Activated B cell treated with CpG ODN at 0.5 μM for 24 hours (primary cell): ENCODE measurements at regions of chr12 and their contacts with region 1.

Region 1: DNA sequence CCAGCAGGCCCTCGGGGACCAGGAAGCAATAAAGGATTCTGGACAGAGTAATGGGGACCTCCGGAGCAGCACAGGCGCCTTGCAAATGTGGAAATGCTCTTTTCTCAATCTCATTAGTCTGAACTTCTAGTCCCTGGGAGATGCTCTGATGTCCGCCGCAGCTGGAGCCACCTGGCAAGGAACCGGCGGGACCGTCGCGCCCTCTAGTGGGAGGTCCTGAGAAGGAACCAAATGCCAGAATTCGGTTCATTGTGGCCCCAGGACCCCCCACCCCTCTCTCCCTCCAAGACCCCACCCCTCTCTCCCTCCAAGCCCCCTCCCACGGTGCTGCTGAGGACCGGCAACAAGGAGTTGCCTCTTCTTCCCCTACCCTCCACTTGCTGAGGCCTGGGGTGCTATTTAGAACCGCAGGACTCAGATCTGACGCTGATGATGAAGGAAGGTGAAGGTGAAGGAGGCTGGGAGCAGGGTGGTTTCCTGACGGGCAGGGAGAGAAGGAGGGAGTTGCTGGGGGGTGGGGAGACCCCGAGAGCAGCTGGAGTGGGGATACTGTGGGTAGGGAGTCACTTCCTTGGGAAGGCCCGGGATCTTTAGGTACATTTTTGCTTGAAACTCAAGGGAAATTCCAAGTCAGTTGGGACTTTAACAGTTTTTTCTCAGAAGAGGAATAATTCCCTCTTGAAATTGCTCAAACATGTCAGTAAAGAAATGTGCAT is 42.5 kb downstream of the SMIM41 start:
- DNase-seq: peak; percentile 56
- ATAC-seq: no peak
- H3K4me3 Mint-ChIP-seq: no peak overlapping the region
- H3K27ac Mint-ChIP-seq: no peak overlapping the region
- H3K4me1 Mint-ChIP-seq: peaks cover 48% of the 10 kb centered on the region
- H3K27me3 Mint-ChIP-seq: peaks cover 11% of the 10 kb centered on the region
- CTCF ChIP-seq: no peak

Region 2: GRCh38 chr12:51823875-51824565 is 298.0 kb before region 1 on chr12:
- CTCF ChIA-PET with region 1: no interaction called
- POLR2A ChIA-PET with region 1: no interaction called
- intact Hi-C with region 1: loop called (anchors 5 kb)
- DNase-seq: no peak
- ATAC-seq: no peak
- H3K4me3 Mint-ChIP-seq: no peak overlapping the region
- H3K27ac Mint-ChIP-seq: no peak overlapping the region
- H3K4me1 Mint-ChIP-seq: peaks cover 16% of the 10 kb centered on the region
- H3K27me3 Mint-ChIP-seq: peaks cover 21% of the 10 kb centered on the region
- CTCF ChIP-seq: no peak

Region 3: GRCh38 chr12:52004042-52004648 is 117.8 kb before region 1 on chr12:
- CTCF ChIA-PET with region 1: interaction called, 9 read pairs
- POLR2A ChIA-PET with region 1: interaction called, 16 read pairs
- intact Hi-C with region 1: loop called (anchors 1 kb)
- DNase-seq: no peak
- ATAC-seq: no peak
- H3K4me3 Mint-ChIP-seq: no peak overlapping the region
- H3K27ac Mint-ChIP-seq: no peak overlapping the region
- H3K4me1 Mint-ChIP-seq: peaks cover 39% of the 10 kb centered on the region
- H3K27me3 Mint-ChIP-seq: no peaks in the 10 kb centered on the region
- CTCF ChIP-seq: no peak

Region 4: DNA sequence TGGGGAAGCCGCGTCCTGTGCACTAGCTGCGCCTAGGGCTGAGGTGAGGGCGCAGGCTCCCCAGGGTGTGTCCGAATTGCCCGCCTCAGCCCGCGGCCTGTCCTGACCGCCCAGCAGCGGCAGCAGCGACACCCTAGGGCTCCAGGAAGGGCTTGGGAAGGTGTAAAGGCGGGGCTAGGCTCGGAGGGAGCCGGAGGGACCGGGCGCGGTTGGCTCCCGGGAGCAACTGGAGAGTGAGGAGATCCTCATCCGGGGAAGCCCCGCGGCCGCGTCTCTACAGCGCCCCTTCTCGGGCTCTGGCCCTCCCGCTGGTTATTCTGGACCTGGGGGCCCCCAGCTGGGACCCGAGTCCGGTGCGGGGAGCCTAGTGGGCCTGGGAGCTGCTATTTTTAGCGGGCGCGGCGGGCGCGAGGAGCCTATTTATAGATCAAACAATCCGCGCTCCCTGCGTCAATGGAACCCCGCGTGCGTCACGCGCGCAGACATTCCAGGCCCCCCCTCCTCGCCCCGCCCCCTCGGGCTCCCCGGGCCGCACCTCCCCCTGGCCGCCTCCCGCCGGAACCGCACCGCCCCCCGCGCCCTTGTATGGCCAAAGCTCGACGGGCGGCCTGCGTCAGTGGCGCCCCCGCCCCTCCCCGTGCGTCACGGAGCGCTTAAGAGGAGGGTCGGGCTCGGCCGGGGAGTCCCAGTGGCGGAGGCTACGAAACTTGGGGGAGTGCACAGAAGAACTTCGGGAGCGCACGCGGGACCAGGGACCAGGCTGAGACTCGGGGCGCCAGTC is 71.0 kb before region 1 on chr12 and contains the start of gene NR4A1:
- CTCF ChIA-PET with region 1: interaction called, 5 read pairs
- POLR2A ChIA-PET with region 1: interaction called, 14 read pairs
- intact Hi-C with region 1: loop called (anchors 1 kb)
- DNase-seq: peak; percentile 100
- ATAC-seq: peak; percentile 82
- H3K4me3 Mint-ChIP-seq: peak within 1 kb of the TSS; percentile 92
- H3K27ac Mint-ChIP-seq: peak within 1 kb of the TSS; percentile 95
- H3K4me1 Mint-ChIP-seq: peaks cover 49% of the 10 kb centered on the region
- H3K27me3 Mint-ChIP-seq: no peaks in the 10 kb centered on the region
- CTCF ChIP-seq: no peak
- total RNA-seq, gene NR4A1: 18.8 and 24.2 TPM in 2 replicates

Region 5: GRCh38 chr12:52082988-52083637 is 38.9 kb before region 1 on chr12:
- CTCF ChIA-PET with region 1: interaction called, 46 read pairs
- POLR2A ChIA-PET with region 1: interaction called, 5 read pairs
- intact Hi-C with region 1: loop called (anchors 1 kb)
- DNase-seq: peak; percentile 70
- ATAC-seq: peak; percentile 63
- H3K4me3 Mint-ChIP-seq: peak overlapping the region; percentile 42
- H3K27ac Mint-ChIP-seq: peak overlapping the region; percentile 48
- H3K4me1 Mint-ChIP-seq: peaks cover 42% of the 10 kb centered on the region
- H3K27me3 Mint-ChIP-seq: peaks cover 8% of the 10 kb centered on the region
- CTCF ChIP-seq: peak; percentile 98

Region 6: DNA sequence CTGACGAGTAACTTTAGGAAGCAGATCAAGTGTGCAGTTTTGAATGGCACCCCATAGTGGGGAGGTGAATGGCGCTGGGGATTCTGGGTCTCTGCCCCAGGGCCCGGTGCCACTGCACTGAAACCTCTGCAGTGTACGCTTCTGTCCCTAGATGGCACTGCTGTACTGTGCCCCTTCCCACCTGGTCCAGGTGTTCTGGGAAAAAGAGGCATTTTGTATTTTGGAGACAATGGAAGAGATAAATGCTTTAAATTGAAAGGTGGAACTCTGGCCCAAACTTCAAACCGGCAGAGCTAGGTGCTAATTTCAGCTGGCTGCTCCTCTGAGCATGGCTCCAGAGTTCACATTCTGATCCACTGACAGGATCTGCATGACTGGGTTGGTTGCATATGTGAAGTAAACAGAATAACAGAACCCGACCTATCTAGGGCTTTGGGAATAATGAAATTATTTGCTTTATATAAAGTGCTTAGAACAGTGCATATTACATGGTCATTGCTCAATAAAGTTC is 17.6 kb after region 1 on chr12:
- CTCF ChIA-PET with region 1: no interaction called
- POLR2A ChIA-PET with region 1: no interaction called
- intact Hi-C with region 1: no loop called
- DNase-seq: no peak
- ATAC-seq: peak; percentile 73
- H3K4me3 Mint-ChIP-seq: no peak overlapping the region
- H3K27ac Mint-ChIP-seq: no peak overlapping the region
- H3K4me1 Mint-ChIP-seq: peaks cover 7% of the 10 kb centered on the region
- H3K27me3 Mint-ChIP-seq: peaks cover 1% of the 10 kb centered on the region
- CTCF ChIP-seq: no peak

Region 7: GRCh38 chr12:52171950-52172512 is 50.0 kb after region 1 on chr12:
- CTCF ChIA-PET with region 1: no interaction called
- POLR2A ChIA-PET with region 1: no interaction called
- intact Hi-C with region 1: no loop called
- DNase-seq: no peak
- ATAC-seq: no peak
- H3K4me3 Mint-ChIP-seq: no peak overlapping the region
- H3K27ac Mint-ChIP-seq: no peak overlapping the region
- H3K4me1 Mint-ChIP-seq: no peaks in the 10 kb centered on the region
- H3K27me3 Mint-ChIP-seq: no peaks in the 10 kb centered on the region
- CTCF ChIP-seq: no peak

Region 8: DNA sequence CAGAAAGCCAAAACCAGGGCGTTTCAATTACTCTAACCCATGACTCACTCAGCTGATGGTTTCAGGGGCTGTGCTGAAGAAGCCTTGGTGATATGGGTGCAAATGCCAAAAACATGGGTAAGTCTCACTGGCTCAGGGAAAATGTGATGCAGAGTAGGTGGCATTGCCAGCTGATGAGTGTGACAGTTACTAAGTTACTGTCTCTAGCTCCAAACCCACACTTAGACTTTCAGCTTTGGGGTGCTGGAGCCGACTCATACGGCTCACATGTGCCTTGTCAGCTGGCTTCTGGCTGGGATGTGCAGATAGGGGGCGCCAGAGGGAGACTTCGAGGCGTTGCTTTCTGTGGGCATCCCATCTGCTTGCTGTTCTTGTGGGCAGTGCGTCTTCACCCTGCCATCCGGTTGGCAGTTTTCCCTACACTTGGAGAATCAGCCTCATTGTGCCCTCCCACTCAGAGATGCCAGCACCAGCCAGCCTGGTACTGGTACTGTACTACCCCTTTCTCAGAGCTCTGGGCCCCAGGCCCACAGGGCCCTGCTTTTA is 100.0 kb after region 1 on chr12:
- CTCF ChIA-PET with region 1: no interaction called
- POLR2A ChIA-PET with region 1: no interaction called
- intact Hi-C with region 1: no loop called
- DNase-seq: no peak
- ATAC-seq: no peak
- H3K4me3 Mint-ChIP-seq: no peak overlapping the region
- H3K27ac Mint-ChIP-seq: no peak overlapping the region
- H3K4me1 Mint-ChIP-seq: no peaks in the 10 kb centered on the region
- H3K27me3 Mint-ChIP-seq: peaks cover 20% of the 10 kb centered on the region
- CTCF ChIP-seq: no peak